ENCODE measurements at regions of chr5 and their contacts with region 1.

Region 1: GRCh38 chr5:181223058-181223728 is at the start of gene TRIM41:
- DNase-seq: peak; percentile 100
- H3K4me3 ChIP-seq: peak within 1 kb of the TSS; percentile 61 to 80 (median 70)
- H3K27ac ChIP-seq: peak within 1 kb of the TSS; percentile 96 to 98 (median 96)
- H3K4me1 ChIP-seq: peaks cover 4 to 33% (median 21%) of the 10 kb centered on the region in 4 donors
- H3K27me3 ChIP-seq: no peaks in the 10 kb centered on the region
- CTCF ChIP-seq: no peak
- EP300 ChIP-seq: peak in 2 of 4 donors; percentile 12 to 22
- POLR2A ChIP-seq: peak; percentile 91 to 95
- total RNA-seq, gene TRIM41: 8.2 to 15.3 (median 11.8) TPM

Region 2: GRCh38 chr5:181173420-181174342 is 49.5 kb before region 1 on chr5:
- intact Hi-C with region 1: no loop called
- DNase-seq: no peak
- H3K4me3 ChIP-seq: no peak overlapping the region
- H3K27ac ChIP-seq: no peak overlapping the region
- H3K4me1 ChIP-seq: peaks cover 0 to 23% (median 7%) of the 10 kb centered on the region in 4 donors
- H3K27me3 ChIP-seq: peaks cover 33 to 76% (median 66%) of the 10 kb centered on the region in 3 donors
- CTCF ChIP-seq: no peak
- EP300 ChIP-seq: no peak
- POLR2A ChIP-seq: no peak

Region 3: GRCh38 chr5:181198963-181199519 is 24.2 kb before region 1 on chr5:
- intact Hi-C with region 1: no loop called
- DNase-seq: no peak
- H3K4me3 ChIP-seq: no peak overlapping the region
- H3K27ac ChIP-seq: no peak overlapping the region
- H3K4me1 ChIP-seq: peaks cover 0 to 6% (median 5%) of the 10 kb centered on the region in 4 donors
- H3K27me3 ChIP-seq: peaks cover 0 to 9% (median 7%) of the 10 kb centered on the region in 3 donors
- CTCF ChIP-seq: no peak
- EP300 ChIP-seq: no peak
- POLR2A ChIP-seq: no peak

Region 4: GRCh38 chr5:181243512-181244343 is 20.5 kb after region 1 on chr5 and contains the start of gene RACK1:
- intact Hi-C with region 1: loop called (anchors 1 kb)
- DNase-seq: peak; percentile 93
- H3K4me3 ChIP-seq: peak within 1 kb of the TSS; percentile 66 to 79 (median 74)
- H3K27ac ChIP-seq: peak within 1 kb of the TSS; percentile 95 to 99 (median 96)
- H3K4me1 ChIP-seq: peaks cover 0 to 62% (median 50%) of the 10 kb centered on the region in 4 donors
- H3K27me3 ChIP-seq: no peaks in the 10 kb centered on the region
- CTCF ChIP-seq: no peak
- EP300 ChIP-seq: no peak
- POLR2A ChIP-seq: peak; percentile 54 to 69
- total RNA-seq, gene RACK1: 2,029 to 2,209 (median 2,163) TPM

Measured in sigmoid colon (tissue), 7 donors.